OCI-LY7 (cell line): ENCODE measurements at regions of chr1 and their contacts with region 1.

Region 1: DNA sequence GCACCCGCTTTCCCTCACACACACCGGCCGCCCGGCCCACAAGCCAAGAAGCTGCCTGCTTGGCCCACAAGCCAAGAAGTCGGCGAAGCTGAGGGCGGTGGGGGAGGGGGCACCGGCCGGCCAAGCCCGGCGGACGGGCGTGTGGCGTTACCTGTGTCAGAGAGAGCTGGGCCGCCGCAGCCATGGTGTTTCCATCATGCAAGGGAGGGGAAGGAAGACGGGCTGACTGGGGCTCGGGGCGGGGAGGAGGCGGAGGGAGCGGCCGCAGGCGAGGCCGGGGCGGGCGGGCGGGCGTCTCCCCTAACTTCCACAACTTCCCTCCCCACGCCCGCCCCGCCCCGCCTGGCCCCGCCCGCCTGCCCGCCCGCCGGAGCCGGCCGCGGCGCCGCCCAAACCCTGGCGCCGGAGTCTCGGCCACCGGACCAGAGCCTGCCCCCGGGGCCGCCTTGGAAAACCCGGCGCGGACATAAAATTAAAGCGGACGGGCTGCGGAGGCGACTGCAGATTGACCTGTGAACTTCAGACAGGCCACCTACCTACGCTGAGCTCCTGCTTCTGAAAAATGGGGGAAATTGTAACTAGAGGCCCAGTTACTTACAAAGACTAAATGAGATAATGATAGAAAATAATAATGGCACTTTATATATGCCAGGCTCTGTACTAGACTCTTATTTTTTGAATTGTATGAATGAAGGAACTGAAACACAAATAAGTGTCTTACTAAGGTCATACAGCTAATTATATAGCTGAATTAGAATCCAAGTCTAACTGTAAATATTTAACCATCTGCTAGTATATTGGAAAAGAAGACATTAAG is at the start of gene EPS15:
- DNase-seq: peak; percentile 89
- H3K4me3 ChIP-seq: peak within 1 kb of the TSS; percentile 95
- H3K27ac ChIP-seq: peak within 1 kb of the TSS; percentile 82
- H3K4me1 ChIP-seq: peaks cover 22% of the 10 kb centered on the region
- CTCF ChIP-seq: no peak
- total RNA-seq, gene EPS15: 23.8 and 35.5 TPM in 2 replicates

Region 2: DNA sequence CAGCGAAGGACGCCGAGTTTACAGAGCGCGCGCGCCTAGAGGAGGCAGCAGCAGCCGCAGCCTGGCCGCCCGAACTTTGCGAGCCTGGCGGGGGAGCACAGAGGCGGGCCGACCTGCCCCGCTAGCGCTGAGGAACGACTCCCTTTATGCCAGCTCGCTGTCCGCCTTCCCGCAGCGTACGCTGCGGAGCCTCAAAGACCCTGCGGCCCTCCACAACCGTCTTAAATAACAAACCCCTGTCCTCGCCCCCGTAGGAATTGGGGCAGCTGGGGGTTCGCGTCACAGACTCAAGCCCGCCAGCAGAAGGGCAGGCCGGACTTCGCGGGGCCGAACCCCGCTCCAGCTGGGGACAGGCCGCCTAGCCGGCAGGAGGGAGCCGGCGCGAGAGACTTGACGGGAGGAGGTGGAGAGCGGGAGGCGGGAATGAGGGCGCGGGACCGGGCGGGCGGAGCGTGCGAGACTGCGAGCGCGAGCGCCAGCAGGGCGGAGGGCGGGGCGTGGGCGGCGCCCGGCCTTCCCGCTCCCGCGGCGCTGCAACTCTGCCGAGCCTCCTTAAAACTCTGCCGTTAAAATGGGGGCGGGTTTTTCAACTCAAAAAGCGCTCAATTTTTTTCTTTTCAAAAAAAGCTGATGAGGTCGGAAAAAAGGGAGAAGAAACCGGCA is 551.0 kb before region 1 on chr1:
- CTCF ChIA-PET with region 1: no interaction called
- POLR2A ChIA-PET with region 1: no interaction called
- intact Hi-C with region 1: loop called (anchors 5 kb)
- DNase-seq: peak; percentile 91
- H3K4me3 ChIP-seq: peak overlapping the region; percentile 88
- H3K27ac ChIP-seq: peak overlapping the region; percentile 89
- H3K4me1 ChIP-seq: peaks cover 23% of the 10 kb centered on the region
- CTCF ChIP-seq: peak; percentile 65

Region 3: DNA sequence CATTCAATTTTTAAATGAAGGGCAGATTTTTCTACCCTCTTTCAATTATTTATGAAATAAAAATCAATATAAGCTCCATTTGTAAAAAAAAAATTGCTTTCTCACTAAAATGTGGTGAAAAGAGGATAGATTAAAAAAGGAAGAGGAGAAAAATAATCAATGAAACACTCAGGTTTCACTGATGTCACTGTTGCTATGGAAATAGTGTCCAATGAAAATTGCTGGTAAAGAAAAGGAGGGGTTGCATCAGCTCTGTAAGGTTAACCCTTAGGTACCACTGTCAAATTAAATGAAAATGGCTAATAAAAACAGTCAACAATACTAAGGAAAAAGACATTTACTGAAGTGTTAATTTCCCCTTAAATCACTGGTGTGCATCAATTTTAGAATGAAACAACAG is 97.3 kb before region 1 on chr1:
- CTCF ChIA-PET with region 1: no interaction called
- POLR2A ChIA-PET with region 1: interaction called, 3 read pairs
- intact Hi-C with region 1: loop called (anchors 5 kb)
- DNase-seq: peak; percentile 62
- H3K4me3 ChIP-seq: no peak overlapping the region
- H3K27ac ChIP-seq: no peak overlapping the region
- H3K4me1 ChIP-seq: peaks cover 6% of the 10 kb centered on the region
- CTCF ChIP-seq: no peak

Region 4: DNA sequence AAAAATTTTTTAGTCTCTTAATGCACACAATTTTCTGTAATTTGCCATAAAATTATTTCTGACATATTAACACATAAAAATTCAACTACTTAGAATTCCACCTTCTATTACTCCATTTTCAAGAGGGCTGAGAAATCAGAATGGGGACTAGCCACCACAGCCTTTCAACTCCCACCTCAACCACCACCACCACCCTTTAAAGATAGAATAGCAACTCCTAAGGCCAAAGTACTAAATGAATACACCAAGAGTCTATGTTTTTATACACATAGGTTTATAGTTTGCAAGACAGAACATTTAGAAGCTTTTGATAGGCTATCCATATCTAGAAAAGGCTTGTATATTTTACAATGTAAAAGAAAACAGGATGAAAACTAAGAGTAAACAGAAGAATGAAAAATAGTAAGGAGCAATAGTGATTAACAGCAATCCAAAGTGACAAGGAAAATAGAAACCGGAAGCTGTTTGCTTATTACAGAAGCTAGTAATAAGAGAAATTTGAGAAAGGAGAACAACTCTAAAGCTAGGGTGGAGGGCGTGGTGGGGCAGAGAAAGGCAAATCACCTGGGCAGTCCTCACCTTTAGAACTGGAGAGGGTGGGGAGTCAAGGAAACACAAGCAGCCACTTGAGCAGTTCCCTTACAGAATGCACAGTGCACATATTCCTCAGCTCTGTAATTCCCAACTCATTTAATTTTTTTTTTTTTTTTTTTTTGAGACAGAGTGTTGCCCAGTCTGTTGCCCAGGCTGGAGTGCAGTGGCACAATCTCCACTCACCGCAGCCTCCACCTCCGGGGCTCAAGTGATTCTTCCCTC is 27.9 kb before region 1 on chr1:
- CTCF ChIA-PET with region 1: no interaction called
- POLR2A ChIA-PET with region 1: interaction called, 4 read pairs
- intact Hi-C with region 1: loop called (anchors 1 kb)
- DNase-seq: peak; percentile 51
- H3K4me3 ChIP-seq: peak overlapping the region; percentile 48
- H3K27ac ChIP-seq: peak overlapping the region; percentile 59
- H3K4me1 ChIP-seq: peaks cover 59% of the 10 kb centered on the region
- CTCF ChIP-seq: no peak

Region 5: GRCh38 chr1:51506537-51506936 is 12.7 kb before region 1 on chr1:
- CTCF ChIA-PET with region 1: no interaction called
- POLR2A ChIA-PET with region 1: interaction called, 19 read pairs
- intact Hi-C with region 1: no loop called
- DNase-seq: peak; percentile 32
- H3K4me3 ChIP-seq: peak overlapping the region; percentile 6
- H3K27ac ChIP-seq: peak overlapping the region; percentile 12
- H3K4me1 ChIP-seq: peaks cover 54% of the 10 kb centered on the region
- CTCF ChIP-seq: no peak

Region 6: GRCh38 chr1:51697166-51697565 is 177.9 kb after region 1 on chr1:
- CTCF ChIA-PET with region 1: no interaction called
- POLR2A ChIA-PET with region 1: no interaction called
- intact Hi-C with region 1: no loop called
- DNase-seq: no peak
- H3K4me3 ChIP-seq: no peak overlapping the region
- H3K27ac ChIP-seq: no peak overlapping the region
- H3K4me1 ChIP-seq: no peaks in the 10 kb centered on the region
- CTCF ChIP-seq: no peak

Region 7: DNA sequence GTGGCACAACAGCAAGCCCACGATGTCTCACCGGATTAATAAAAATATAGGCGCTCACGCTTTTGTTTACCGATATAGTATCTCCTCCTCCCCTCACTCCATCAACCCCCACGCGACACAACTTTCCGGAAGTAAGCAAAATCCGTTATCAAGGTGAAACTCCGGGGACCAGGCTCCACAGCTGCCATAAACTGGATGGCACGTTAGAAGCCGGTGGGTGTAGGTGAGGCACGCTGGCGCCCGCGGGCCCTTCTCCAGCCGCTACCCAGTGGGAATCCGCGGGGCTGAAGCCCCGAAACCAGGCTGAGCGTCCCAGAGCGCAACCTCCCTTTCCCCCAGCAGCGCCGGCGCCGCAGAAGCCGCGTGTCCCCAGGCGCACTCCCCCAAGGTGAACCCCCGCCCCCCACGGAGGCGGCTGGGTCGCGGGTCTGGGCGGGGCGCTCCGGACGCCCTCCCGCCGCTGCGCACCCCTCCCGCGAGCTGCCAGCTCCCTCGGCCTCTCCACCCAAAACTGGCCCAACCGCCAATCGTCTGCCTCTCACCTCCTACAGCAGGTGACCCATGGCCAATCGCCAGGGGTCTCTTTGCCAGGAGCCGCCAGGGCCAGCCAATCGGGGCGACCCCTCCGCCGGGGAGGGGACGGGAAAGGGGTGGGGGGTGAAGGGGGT is 210.0 kb after region 1 on chr1:
- CTCF ChIA-PET with region 1: no interaction called
- POLR2A ChIA-PET with region 1: interaction called, 3 read pairs
- intact Hi-C with region 1: loop called (anchors 2 kb)
- DNase-seq: peak; percentile 98
- H3K4me3 ChIP-seq: peak overlapping the region; percentile 83
- H3K27ac ChIP-seq: peak overlapping the region; percentile 67
- H3K4me1 ChIP-seq: peaks cover 48% of the 10 kb centered on the region
- CTCF ChIP-seq: no peak

Region 8: DNA sequence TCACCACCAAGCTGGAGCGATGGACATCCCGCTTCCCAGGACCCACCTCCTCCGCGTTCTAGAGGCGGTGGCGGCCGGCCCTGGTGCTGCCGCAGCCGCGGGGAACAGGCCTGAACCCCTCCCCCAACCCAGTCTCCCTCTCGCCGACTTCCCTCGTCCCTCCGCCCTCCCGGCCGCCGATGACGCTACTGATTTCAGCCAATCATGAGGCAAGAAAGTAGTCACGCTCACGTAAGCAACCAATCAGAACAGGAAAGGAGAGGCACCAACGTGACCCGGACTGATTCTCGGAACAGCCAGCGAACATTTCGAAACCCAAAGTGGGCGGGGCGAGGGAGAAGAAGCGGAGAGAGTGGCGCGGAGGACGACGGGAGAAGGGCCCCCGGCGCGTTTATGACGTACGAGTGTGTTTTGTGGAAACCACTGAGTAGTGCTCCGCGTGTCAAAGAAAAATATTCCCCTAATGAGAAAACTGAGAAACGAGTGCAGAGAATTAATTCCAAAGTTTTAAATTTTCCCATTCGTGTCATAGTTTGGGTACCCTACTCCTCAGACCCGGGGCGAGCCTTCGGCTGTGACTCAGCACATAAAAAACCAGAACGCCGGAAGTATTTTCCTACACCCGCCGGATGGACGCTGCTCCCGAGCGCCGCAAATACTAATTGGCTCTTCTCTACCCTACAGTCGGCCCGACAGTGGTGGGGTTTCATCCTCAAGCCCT is 359.5 kb after region 1 on chr1 and contains the start of gene NRDC:
- CTCF ChIA-PET with region 1: no interaction called
- POLR2A ChIA-PET with region 1: no interaction called
- intact Hi-C with region 1: loop called (anchors 5 kb)
- DNase-seq: peak; percentile 100
- H3K4me3 ChIP-seq: peak within 1 kb of the TSS; percentile 88
- H3K27ac ChIP-seq: peak within 1 kb of the TSS; percentile 71
- H3K4me1 ChIP-seq: peaks cover 30% of the 10 kb centered on the region
- CTCF ChIP-seq: no peak
- total RNA-seq, gene NRDC: 48.0 TPM in 2 replicates